ENCODE measurements at regions of chr20 and their contacts with region 1.

Region 1: GRCh38 chr20:9978397-9979004 is 56.3 kb upstream of the ANKEF1 start:
- DNase-seq: peak; percentile 32
- H3K4me3 Mint-ChIP-seq: no peak overlapping the region
- H3K27ac Mint-ChIP-seq: no peak overlapping the region
- H3K4me1 Mint-ChIP-seq: no peaks in the 10 kb centered on the region
- H3K27me3 Mint-ChIP-seq: peaks cover 6% of the 10 kb centered on the region

Region 2: GRCh38 chr20:9903048-9903655 is 75.3 kb before region 1 on chr20:
- CTCF ChIA-PET with region 1: no interaction called
- POLR2A ChIA-PET with region 1: no interaction called
- DNase-seq: no peak
- H3K4me3 Mint-ChIP-seq: no peak overlapping the region
- H3K27ac Mint-ChIP-seq: no peak overlapping the region
- H3K4me1 Mint-ChIP-seq: no peaks in the 10 kb centered on the region
- H3K27me3 Mint-ChIP-seq: no peaks in the 10 kb centered on the region

Region 3: GRCh38 chr20:10090588-10091166 is 112.2 kb after region 1 on chr20:
- CTCF ChIA-PET with region 1: interaction called, 85 read pairs
- POLR2A ChIA-PET with region 1: no interaction called
- DNase-seq: peak; percentile 19
- H3K4me3 Mint-ChIP-seq: no peak overlapping the region
- H3K27ac Mint-ChIP-seq: no peak overlapping the region
- H3K4me1 Mint-ChIP-seq: no peaks in the 10 kb centered on the region
- H3K27me3 Mint-ChIP-seq: no peaks in the 10 kb centered on the region

Region 4: DNA sequence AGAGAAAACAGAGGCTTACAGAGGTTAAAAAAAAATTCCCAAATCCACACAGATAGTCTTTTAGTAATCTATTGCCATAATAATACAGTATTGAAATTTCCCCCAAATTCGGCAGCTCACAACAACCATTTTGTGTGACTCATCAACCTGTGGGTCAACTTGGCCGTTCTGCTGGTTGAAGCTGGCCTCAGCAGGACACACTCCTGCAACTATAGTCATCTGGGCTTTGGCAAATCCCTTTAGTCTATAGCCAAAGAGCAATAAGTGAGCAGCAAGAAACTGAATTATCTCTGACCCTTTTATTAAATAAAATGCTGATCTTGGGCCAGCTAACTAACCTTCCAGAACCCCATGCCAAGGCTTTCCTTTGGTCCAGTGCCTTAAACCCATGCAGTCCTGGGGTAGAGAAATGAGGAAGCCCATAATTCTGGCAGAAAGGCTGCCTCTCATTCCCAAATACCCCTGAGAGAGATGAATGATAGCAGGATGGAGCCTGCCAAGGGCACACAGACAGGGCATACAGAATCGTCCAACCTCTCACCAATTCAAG is 222.9 kb after region 1 on chr20:
- CTCF ChIA-PET with region 1: no interaction called
- POLR2A ChIA-PET with region 1: no interaction called
- DNase-seq: no peak
- H3K4me3 Mint-ChIP-seq: no peak overlapping the region
- H3K27ac Mint-ChIP-seq: no peak overlapping the region
- H3K4me1 Mint-ChIP-seq: no peaks in the 10 kb centered on the region
- H3K27me3 Mint-ChIP-seq: peaks cover 2% of the 10 kb centered on the region